ENCODE measurements at regions of chr1 and their contacts with region 1.

Region 1: DNA sequence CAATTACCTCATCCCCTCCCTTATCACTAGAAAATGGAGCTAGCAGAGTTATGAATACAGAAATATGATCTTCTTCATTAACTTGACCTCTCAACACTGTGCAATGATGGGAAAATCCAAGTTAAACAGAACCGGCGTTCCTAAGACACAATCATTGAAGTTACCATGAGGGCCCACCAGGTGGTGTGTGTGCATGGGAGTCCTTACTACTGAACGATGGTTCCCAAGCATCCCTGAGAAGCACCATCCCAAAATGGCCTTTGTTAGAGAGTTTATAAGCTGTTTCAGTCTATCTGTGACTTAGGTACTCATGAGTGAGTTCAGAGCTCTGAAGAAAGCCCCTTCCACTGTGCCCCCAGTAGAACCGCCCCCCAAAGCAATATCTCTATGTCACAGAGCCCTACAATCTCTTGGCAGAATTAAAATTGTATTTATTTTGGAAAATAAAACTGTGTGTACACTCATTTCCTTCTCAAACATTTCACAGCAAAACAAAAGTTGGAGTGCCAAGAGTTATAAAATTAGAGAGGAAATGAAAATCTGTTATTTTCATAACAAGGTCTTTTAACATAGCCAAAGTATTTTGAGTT is 56.8 kb downstream of the PLD5 start:
- DNase-seq: peak; percentile 38
- CTCF ChIP-seq: peak; percentile 51

Region 2: DNA sequence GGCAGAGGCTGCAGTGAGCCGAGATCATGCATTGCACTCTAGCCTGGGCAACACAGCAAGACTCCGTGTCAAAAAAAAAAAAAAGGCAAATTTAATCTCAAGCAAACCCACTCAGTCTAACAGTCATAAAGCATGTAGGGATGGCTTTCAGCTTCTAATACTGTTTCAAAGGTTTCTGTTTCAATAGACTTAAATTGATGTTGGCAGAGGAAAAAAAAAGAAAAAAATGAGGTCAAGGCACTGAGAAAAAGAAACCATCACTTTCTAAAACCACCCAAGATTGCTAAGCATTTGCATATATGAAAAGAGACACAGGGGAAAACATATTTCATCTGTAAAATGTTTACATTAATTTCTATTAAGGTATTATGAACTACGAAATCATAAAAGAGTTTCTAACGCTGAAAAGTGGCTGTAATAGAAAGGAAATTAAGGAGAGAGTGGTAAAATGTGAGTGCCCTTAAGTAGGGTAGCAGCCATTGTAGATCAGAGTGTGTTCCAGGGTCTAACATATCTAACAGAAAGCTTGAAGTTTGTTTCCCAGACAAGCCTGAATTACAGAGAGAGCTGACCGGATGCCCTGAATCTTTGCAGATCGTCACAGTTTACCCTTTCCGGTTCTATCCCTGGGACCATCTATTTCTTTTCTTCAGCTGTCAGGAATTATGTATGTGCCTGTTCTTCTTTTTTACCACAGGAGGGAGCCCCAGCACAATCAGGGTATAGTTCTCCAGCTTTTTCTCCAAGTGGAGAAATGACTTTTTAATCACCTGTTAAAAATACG is 13.2 kb before region 1 on chr1:
- CTCF ChIA-PET with region 1: interaction called, 12 read pairs
- POLR2A ChIA-PET with region 1: no interaction called
- DNase-seq: peak; percentile 30
- CTCF ChIP-seq: peak; percentile 57

Region 3: DNA sequence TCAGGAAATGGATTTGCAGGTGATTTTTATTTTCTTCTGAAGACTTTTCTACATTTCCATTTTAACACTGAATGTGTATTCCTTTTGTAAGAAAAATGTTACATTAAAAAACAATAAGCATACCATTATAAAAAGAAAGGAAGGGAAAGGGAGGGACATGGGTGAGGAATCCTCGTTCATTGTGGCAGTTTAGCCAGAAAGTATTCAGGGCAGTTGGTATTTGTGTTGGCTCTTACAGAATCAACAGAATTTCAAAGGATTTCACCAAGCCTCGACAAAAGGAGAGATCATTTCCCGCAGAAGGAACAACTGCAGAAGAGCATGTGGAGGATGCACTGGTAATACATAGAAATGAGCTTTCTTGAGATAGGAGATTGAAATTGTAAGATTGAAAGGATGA is 21.9 kb after region 1 on chr1:
- CTCF ChIA-PET with region 1: no interaction called
- POLR2A ChIA-PET with region 1: no interaction called
- DNase-seq: no peak
- CTCF ChIP-seq: no peak

Measured in GM10248 (cell line).